MCF 10A (cell line): ENCODE measurements at regions of chr12 and their contacts with region 1.

Region 1: GRCh38 chr12:110600254-110600653 is 13.7 kb upstream of the TCTN1 start:
- DNase-seq: peak; percentile 68
- H3K4me3 Mint-ChIP-seq: no peak overlapping the region
- H3K27ac Mint-ChIP-seq: no peak overlapping the region
- H3K4me1 Mint-ChIP-seq: peaks cover 7% of the 10 kb centered on the region
- H3K27me3 Mint-ChIP-seq: no peaks in the 10 kb centered on the region
- CTCF ChIP-seq: peak; percentile 66

Region 2: GRCh38 chr12:110100315-110100970 is 499.8 kb before region 1 on chr12:
- CTCF ChIA-PET with region 1: interaction called, 3 read pairs
- POLR2A ChIA-PET with region 1: no interaction called
- intact Hi-C with region 1: loop called (anchors 1 kb)
- DNase-seq: peak; percentile 78
- H3K4me3 Mint-ChIP-seq: no peak overlapping the region
- H3K27ac Mint-ChIP-seq: no peak overlapping the region
- H3K4me1 Mint-ChIP-seq: peaks cover 7% of the 10 kb centered on the region
- H3K27me3 Mint-ChIP-seq: no peaks in the 10 kb centered on the region
- CTCF ChIP-seq: peak; percentile 85

Region 3: GRCh38 chr12:110468212-110469048 is 131.8 kb before region 1 on chr12 and contains the starts of genes FAM216A and GPN3:
- CTCF ChIA-PET with region 1: interaction called, 85 read pairs
- POLR2A ChIA-PET with region 1: interaction called, 32 read pairs
- intact Hi-C with region 1: loop called (anchors 1 kb)
- DNase-seq: peak; percentile 99
- H3K4me3 Mint-ChIP-seq: peak within 1 kb of the TSS; percentile 88
- H3K27ac Mint-ChIP-seq: peak within 1 kb of the TSS; percentile 93
- H3K4me1 Mint-ChIP-seq: peaks cover 11% of the 10 kb centered on the region
- H3K27me3 Mint-ChIP-seq: no peaks in the 10 kb centered on the region
- CTCF ChIP-seq: no peak
- total RNA-seq, gene FAM216A: 19.9 and 25.8 TPM in 2 replicates
- total RNA-seq, gene GPN3: 16.1 and 18.1 TPM in 2 replicates

Region 4: DNA sequence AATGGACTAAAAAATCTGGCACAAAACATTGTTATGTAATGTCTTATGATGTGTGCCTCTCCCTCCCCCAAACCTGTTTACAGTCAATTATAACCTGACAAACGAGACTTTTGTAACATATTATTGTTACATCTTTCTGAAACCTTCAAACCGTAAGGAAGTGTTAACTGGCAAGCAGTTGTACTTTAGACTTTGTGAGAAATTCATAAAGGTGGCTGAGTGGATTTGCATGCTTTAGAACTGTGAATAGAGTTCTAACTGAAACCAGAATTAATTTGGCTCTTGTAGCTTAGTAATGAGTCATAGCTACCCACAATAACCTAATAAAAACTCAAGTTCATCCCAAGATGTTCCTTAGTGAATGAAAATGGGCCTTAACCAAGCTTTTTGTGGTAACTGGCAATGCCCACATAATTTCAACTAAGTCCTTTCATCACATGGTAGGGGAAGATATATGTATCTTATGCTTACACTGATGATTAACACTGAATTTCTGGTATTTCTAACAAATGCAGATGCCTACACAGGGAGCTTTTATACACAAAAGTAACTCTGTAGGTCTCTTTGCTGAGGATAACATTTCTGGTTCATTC is 68.4 kb before region 1 on chr12:
- CTCF ChIA-PET with region 1: interaction called, 42 read pairs
- POLR2A ChIA-PET with region 1: interaction called, 7 read pairs
- intact Hi-C with region 1: no loop called
- DNase-seq: peak; percentile 73
- H3K4me3 Mint-ChIP-seq: no peak overlapping the region
- H3K27ac Mint-ChIP-seq: peak overlapping the region; percentile 42
- H3K4me1 Mint-ChIP-seq: peaks cover 18% of the 10 kb centered on the region
- H3K27me3 Mint-ChIP-seq: no peaks in the 10 kb centered on the region
- CTCF ChIP-seq: no peak

Region 5: DNA sequence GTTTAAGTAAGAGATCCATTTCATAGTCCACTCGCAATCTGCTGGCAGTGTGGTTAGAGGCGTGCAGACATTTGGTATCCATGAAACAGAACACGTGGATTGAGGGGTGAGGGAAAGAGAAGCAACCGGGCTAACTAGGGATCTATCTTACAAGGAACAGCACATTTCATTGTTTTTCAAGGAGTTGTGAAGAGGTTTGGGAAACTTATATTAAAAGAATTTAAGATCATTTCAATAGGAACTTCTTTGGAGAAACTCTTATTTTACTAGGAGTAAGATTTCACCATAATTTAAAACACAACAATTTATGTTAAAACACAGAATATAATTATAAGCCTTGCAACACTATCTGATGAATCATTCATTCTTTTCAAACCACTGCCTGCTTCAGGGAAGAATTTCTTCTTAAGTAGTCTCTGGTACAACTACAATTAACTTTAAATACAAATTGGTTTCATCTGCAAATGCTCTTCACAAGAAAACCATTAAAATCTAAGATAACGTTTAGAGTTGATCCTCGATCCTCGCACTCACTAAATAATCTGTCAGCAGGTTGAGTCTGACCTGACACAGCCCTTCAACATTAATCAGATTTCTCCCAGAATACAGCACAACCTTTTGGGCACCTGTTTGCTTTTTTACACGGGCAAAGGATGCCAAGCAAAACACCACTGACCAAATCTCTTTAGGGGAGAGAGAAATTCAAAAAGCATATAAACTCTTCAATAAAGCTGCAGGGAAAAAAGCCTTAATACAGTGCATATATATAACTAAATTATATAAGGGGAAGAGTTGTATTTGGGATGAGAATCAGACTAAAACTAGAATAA is 44.5 kb before region 1 on chr12:
- CTCF ChIA-PET with region 1: interaction called, 34 read pairs
- POLR2A ChIA-PET with region 1: interaction called, 5 read pairs
- intact Hi-C with region 1: loop called (anchors 1 kb)
- DNase-seq: peak; percentile 78
- H3K4me3 Mint-ChIP-seq: peak overlapping the region; percentile 49
- H3K27ac Mint-ChIP-seq: peak overlapping the region; percentile 97
- H3K4me1 Mint-ChIP-seq: peaks cover 55% of the 10 kb centered on the region
- H3K27me3 Mint-ChIP-seq: no peaks in the 10 kb centered on the region
- CTCF ChIP-seq: no peak

Region 6: GRCh38 chr12:110613771-110614684 is 13.8 kb after region 1 on chr12 and contains the start of gene TCTN1:
- CTCF ChIA-PET with region 1: interaction called, 24 read pairs
- POLR2A ChIA-PET with region 1: interaction called, 7 read pairs
- intact Hi-C with region 1: no loop called
- DNase-seq: peak; percentile 92
- H3K4me3 Mint-ChIP-seq: peak within 1 kb of the TSS; percentile 78
- H3K27ac Mint-ChIP-seq: peak within 1 kb of the TSS; percentile 66
- H3K4me1 Mint-ChIP-seq: no peaks in the 10 kb centered on the region
- H3K27me3 Mint-ChIP-seq: no peaks in the 10 kb centered on the region
- CTCF ChIP-seq: no peak
- total RNA-seq, gene TCTN1: 36.5 and 38.9 TPM in 2 replicates

Region 7: GRCh38 chr12:110689281-110690126 is 89.2 kb after region 1 on chr12:
- CTCF ChIA-PET with region 1: no interaction called
- POLR2A ChIA-PET with region 1: no interaction called
- intact Hi-C with region 1: no loop called
- DNase-seq: no peak
- H3K4me3 Mint-ChIP-seq: peak overlapping the region; percentile 33
- H3K27ac Mint-ChIP-seq: no peak overlapping the region
- H3K4me1 Mint-ChIP-seq: no peaks in the 10 kb centered on the region
- H3K27me3 Mint-ChIP-seq: peaks cover 53% of the 10 kb centered on the region
- CTCF ChIP-seq: no peak